Activated naive CD4-positive, alpha-beta T cell treated with anti-CD3 and anti-CD28 coated beads for 36 hours (primary cell): ENCODE measurements at regions of chr2 and their contacts with region 1.

Region 1: DNA sequence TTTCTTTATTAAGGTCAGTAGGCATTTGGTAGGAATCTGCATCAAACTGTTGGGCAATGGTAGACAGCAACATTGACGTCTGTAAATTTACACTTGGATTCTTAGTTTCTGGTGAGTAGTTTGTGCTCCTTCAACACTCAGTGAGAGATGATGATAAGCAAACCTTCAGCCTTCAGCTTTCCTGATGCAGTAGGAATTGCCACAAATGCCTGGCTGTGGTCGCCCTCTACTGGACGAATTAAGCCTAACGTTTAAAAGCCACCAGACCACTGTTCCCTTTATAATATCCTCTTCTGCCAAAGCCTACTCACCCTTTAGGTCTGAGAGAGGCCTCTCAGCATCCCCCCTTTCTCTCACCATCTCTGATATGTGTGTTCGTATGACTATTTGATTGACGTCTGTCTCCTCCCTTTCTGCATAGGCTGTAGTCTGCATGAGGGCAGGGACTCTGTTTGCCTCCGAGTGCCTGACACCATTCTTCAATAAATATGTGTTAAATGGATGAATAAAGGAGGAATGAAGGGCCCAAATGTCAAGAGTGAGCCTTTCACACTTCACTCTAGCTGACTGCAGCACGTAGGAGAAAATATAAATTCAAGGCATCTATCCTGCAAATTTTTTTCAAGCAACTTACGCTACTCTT is 47.0 kb upstream of the PLEKHM3 start:
- DNase-seq: peak; percentile 76
- H3K4me3 Mint-ChIP-seq: no peak overlapping the region
- H3K27ac Mint-ChIP-seq: no peak overlapping the region
- H3K4me1 Mint-ChIP-seq: no peaks in the 10 kb centered on the region
- H3K27me3 Mint-ChIP-seq: peaks cover under 1% of the 10 kb centered on the region

Region 2: GRCh38 chr2:207974216-207974605 is 98.2 kb before region 1 on chr2:
- CTCF ChIA-PET with region 1: no interaction called
- intact Hi-C with region 1: loop called (anchors 1 kb)
- DNase-seq: no peak
- H3K4me3 Mint-ChIP-seq: no peak overlapping the region
- H3K27ac Mint-ChIP-seq: no peak overlapping the region
- H3K4me1 Mint-ChIP-seq: peaks cover 17% of the 10 kb centered on the region
- H3K27me3 Mint-ChIP-seq: no peaks in the 10 kb centered on the region